PC-9 (cell line): ENCODE measurements at regions of chr22 and their contacts with region 1.

Region 1: GRCh38 chr22:21102659-21103267 is 57.0 kb downstream of the LRRC74B start:
- DNase-seq: peak; percentile 37 to 51
- H3K4me3 ChIP-seq: peak overlapping the region; percentile 33; the same call in 1 of the 2 replicates
- H3K27ac ChIP-seq: no peak overlapping the region
- H3K4me1 ChIP-seq: peaks cover 34% of the 10 kb centered on the region
- H3K27me3 ChIP-seq: no peaks in the 10 kb centered on the region
- CTCF ChIP-seq: peak; percentile 69

Region 2: GRCh38 chr22:20792947-20793294 is 309.8 kb before region 1 on chr22:
- CTCF ChIA-PET with region 1: no interaction called
- POLR2A ChIA-PET with region 1: no interaction called
- intact Hi-C with region 1: loop called (anchors 10 kb)
- DNase-seq: no peak
- H3K4me3 ChIP-seq: no peak overlapping the region
- H3K27ac ChIP-seq: no peak overlapping the region
- H3K4me1 ChIP-seq: no peaks in the 10 kb centered on the region
- H3K27me3 ChIP-seq: no peaks in the 10 kb centered on the region
- CTCF ChIP-seq: no peak